ENCODE measurements at regions of chr3 and their contacts with region 1.

Region 1: DNA sequence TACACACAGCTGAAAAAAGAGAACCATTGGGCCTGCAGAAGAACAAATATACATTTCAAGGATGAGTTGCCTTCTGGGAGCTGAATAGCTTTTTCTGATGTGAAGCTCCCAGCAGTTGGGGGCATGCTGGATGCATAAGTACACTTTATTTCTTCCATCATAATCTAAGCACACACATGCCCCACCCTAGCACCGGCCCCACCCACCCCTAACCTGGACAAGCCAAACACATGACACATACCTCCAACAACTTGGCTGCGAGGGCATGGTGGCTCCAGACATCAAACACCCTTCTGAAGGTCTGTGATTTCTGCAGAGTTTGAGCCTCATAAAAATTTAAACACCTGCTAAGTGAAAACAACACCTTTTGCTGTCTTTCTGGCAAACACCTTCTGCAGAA is 307.2 kb upstream of the TRIM42 start:
- DNase-seq: no peak
- ATAC-seq: no peak
- H3K4me3 ChIP-seq: no peak overlapping the region
- H3K4me3 Mint-ChIP-seq: no peak overlapping the region
- H3K27ac ChIP-seq: no peak overlapping the region
- H3K27ac Mint-ChIP-seq: no peak overlapping the region
- H3K4me1 ChIP-seq: no peaks in the 10 kb centered on the region
- H3K4me1 Mint-ChIP-seq: no peaks in the 10 kb centered on the region
- H3K27me3 ChIP-seq: no peaks in the 10 kb centered on the region
- H3K27me3 Mint-ChIP-seq: peaks cover 2% of the 10 kb centered on the region
- CTCF ChIP-seq: no peak

Region 2: DNA sequence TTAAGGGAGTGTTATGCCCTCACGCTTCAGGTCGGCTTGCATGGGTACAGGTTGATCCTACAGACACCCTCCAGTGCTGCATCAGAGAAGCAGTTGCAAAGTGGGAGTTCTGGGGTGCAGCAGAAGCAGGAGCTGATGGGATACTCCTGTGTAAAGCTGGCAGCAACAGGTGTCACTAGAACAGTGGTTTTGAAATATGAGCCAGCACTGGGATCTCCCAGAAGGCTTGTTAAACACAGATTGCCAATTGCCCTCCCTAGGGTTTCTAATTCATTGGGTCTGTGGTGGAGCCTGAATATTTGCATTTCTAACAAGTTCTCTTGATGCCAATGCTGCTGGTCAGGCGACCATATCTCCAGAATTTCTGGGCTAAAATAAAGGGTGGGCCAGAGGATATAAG is 85.3 kb before region 1 on chr3:
- CTCF ChIA-PET with region 1: no interaction called
- POLR2A ChIA-PET with region 1: no interaction called
- intact Hi-C with region 1: no loop called
- DNase-seq: no peak
- ATAC-seq: no peak
- H3K4me3 ChIP-seq: no peak overlapping the region
- H3K4me3 Mint-ChIP-seq: no peak overlapping the region
- H3K27ac ChIP-seq: no peak overlapping the region
- H3K27ac Mint-ChIP-seq: no peak overlapping the region
- H3K4me1 ChIP-seq: no peaks in the 10 kb centered on the region
- H3K4me1 Mint-ChIP-seq: no peaks in the 10 kb centered on the region
- H3K27me3 ChIP-seq: no peaks in the 10 kb centered on the region
- H3K27me3 Mint-ChIP-seq: peaks cover 7% of the 10 kb centered on the region
- CTCF ChIP-seq: no peak

Region 3: GRCh38 chr3:140344082-140344454 is 26.6 kb before region 1 on chr3:
- CTCF ChIA-PET with region 1: no interaction called
- POLR2A ChIA-PET with region 1: no interaction called
- intact Hi-C with region 1: loop called in 1 of 2 experiments (anchors 1 kb)
- DNase-seq: no peak
- ATAC-seq: no peak
- H3K4me3 ChIP-seq: no peak overlapping the region
- H3K4me3 Mint-ChIP-seq: no peak overlapping the region
- H3K27ac ChIP-seq: no peak overlapping the region
- H3K27ac Mint-ChIP-seq: no peak overlapping the region
- H3K4me1 ChIP-seq: no peaks in the 10 kb centered on the region
- H3K4me1 Mint-ChIP-seq: no peaks in the 10 kb centered on the region
- H3K27me3 ChIP-seq: no peaks in the 10 kb centered on the region
- H3K27me3 Mint-ChIP-seq: peaks cover 4% of the 10 kb centered on the region
- CTCF ChIP-seq: no peak

Region 4: DNA sequence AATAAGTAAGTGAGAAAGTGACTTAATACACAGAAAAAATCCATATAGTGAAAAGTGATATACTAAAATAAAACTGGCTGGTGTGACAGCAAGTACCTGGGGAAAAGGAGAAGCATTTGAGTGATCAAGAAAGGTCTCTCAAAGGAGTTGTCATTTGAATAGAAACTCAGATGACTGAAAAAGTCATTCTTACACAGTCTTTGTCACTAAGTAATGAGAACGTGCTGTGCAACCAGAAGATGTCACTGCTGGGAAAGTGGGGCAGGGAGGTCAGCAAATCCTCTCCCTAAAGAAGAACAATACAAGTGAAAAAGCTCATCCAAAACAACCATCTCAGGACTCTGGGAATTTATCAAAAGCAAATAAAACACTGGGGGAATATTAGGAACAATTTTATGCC is 10.4 kb before region 1 on chr3:
- CTCF ChIA-PET with region 1: no interaction called
- POLR2A ChIA-PET with region 1: no interaction called
- intact Hi-C with region 1: no loop called
- DNase-seq: no peak
- ATAC-seq: no peak
- H3K4me3 ChIP-seq: no peak overlapping the region
- H3K4me3 Mint-ChIP-seq: no peak overlapping the region
- H3K27ac ChIP-seq: no peak overlapping the region
- H3K27ac Mint-ChIP-seq: no peak overlapping the region
- H3K4me1 ChIP-seq: no peaks in the 10 kb centered on the region
- H3K4me1 Mint-ChIP-seq: no peaks in the 10 kb centered on the region
- H3K27me3 ChIP-seq: no peaks in the 10 kb centered on the region
- H3K27me3 Mint-ChIP-seq: peaks cover 12% of the 10 kb centered on the region
- CTCF ChIP-seq: no peak